Posterior cingulate gyrus (tissue), 11 donors: ENCODE measurements at regions of chr11 and their contacts with region 1.

Region 1: DNA sequence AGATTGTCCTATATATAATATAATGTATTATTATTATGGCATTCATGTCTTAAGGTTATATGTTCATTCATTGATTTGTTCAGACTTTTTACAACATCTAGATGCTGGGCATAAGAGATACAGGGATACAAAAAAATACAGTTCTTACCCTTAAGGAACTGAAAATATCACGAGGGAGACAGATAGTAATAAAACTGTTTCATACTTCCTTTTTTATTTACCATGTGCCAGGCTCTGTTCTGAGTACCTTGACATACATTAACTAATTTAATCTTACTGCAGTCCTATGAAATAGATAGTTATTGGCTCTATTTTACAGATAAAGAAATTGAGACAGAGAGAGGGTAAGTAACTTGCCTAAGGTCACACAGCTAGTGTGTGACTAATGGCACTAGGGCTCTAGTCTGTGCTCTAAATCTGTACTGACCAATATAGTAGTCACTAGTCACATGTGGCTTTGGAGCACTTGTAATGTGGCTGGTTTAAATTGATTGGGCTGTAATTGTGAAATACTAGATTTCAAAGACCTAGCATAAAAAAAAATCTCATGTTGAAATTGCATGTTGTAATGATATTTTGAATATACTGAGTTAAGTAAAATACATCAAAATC is 21.3 kb downstream of the TRIM44 start:
- DNase-seq: no peak

Region 2: DNA sequence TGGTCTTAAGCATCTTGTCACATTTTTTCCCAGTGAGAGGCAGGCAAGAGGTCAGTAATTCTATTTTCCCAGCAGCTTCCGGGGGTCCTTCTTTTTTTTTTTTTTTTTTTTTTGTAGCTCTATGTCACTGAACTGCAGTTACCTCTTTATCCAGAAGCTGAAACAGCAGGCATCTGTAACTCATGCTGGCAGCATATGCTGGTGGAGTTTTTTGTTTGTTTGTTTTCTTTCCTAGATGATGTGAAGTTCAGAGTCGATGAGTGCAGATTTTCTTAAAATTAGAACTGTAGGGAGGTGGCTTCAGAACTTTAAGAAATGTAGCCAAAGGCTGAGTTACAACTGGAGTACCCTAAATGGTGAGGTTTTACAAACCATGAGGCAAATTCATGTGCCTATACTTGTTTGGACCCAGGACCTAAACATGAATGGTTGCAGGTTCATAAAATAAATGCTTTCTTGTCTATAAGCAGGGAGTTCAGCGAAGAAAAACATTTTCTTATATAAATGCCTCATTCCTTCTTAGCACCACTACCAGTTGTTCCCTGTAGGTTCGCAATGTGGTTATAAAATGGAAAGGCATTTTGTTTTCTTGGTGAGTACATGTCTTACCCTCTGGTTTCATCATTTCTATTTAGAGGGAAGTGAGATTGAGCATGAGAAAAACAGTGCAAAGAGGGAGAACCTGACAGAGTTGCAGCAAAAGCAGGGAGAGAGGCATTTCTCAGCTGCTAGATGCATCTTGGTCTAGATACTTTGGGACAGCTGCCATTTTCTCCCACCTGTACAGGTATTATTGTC is 62.7 kb after region 1 on chr11:
- intact Hi-C with region 1: loop called (anchors 10 kb)
- DNase-seq: no peak